ENCODE measurements at regions of chr6 and their contacts with region 1.

Region 1: DNA sequence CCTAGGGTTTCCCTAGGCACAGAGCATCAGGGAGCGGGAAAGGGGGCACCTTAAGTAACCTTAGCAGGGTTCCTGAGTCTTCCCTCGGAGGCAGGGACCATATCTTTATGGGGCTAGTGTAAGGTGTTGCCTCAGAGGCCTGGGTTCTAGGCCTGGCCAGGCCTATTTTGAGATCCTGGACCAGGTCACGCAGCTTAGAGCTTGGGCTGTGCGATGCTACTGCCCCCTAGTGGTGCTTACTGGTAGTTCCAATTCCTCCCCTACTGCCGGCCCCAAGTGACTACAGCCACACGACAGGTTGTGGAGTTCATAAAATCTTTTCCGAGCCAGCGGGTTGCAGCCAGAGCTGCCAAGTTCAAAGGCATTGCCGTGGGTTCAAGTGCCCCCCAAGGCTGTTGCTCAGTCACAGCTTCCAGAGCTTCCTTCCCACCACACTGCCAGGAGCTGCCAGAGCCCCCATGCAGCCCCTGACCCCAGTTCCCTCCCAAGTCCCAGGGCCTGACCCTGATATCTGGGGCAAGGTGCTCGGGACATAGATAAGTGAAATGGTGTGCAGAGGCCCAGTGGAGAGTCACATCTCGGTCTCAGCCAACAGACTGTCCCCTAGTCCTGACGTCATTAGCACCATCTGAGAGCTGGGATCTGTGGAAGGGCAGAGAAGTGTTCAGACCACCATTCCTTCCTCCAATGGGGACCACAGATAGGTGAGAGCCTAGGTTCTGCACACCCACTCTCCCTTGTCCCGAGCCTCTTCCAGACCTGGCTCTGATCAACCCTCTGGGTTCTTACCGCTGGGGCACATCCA is 3.3 kb downstream of the LRRC73 start:
- DNase-seq: peak; percentile 89
- H3K4me3 Mint-ChIP-seq: no peak overlapping the region
- H3K27ac Mint-ChIP-seq: no peak overlapping the region
- H3K4me1 Mint-ChIP-seq: peaks cover 5% of the 10 kb centered on the region
- H3K27me3 Mint-ChIP-seq: peaks cover 14% of the 10 kb centered on the region

Region 2: GRCh38 chr6:42901536-42901957 is 605.3 kb before region 1 on chr6:
- CTCF ChIA-PET with region 1: no interaction called
- intact Hi-C with region 1: loop called (anchors 5 kb)
- DNase-seq: peak; percentile 83
- H3K4me3 Mint-ChIP-seq: no peak overlapping the region
- H3K27ac Mint-ChIP-seq: no peak overlapping the region
- H3K4me1 Mint-ChIP-seq: peaks cover 11% of the 10 kb centered on the region
- H3K27me3 Mint-ChIP-seq: no peaks in the 10 kb centered on the region

Region 3: DNA sequence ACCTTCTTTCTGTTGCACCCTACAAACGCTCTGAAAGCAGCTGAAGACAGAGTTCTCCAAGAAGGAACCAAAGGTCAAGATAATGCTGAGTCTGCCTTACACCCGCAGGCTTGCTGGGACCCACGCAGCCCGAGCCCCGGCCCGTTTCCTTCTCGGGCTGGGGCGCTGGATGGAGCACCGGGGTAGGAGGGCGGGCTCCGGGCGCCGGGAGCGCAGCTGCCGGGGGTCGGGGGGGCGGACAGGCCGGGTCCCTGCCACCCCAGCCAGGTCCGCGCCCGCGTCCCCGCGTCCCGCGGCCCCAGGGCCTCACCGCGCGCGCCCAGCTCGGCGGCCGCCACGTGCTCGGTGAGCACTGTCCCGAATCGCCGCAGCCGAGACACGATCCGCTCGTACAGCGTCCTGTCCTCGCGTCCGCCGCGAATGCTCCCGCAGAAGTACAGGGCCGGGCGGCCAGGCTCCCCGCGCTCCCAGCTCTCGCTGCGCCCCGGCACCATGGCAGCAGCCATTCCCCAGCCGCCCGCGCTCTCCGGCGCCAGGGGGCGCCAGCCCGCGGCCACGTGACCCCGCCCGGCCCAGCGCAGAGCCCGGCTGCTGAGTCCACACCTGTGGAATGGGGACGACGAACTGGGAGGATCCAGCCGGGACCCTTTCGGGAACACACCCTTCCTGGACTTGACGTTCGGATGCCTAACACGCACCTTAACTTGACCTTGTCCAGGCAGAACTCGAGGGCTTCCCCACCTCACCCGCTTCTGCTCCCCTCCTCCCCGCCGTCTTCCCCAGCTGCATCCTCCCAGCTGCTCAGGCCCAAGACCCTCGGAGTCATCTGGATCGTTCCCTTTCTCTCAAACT is 277.7 kb before region 1 on chr6 and contains the start of gene DNPH1:
- CTCF ChIA-PET with region 1: interaction called, 10 read pairs
- intact Hi-C with region 1: no loop called
- DNase-seq: peak; percentile 79
- H3K4me3 Mint-ChIP-seq: peak within 1 kb of the TSS; percentile 90
- H3K27ac Mint-ChIP-seq: peak within 1 kb of the TSS; percentile 89
- H3K4me1 Mint-ChIP-seq: peaks cover 41% of the 10 kb centered on the region
- H3K27me3 Mint-ChIP-seq: no peaks in the 10 kb centered on the region
- total RNA-seq, gene DNPH1: 59.7 to 59.8 TPM

Region 4: GRCh38 chr6:43308101-43308989 is 198.5 kb before region 1 on chr6 and contains the start of gene CRIP3:
- CTCF ChIA-PET with region 1: interaction called, 17 read pairs
- intact Hi-C with region 1: no loop called
- DNase-seq: peak; percentile 67
- H3K4me3 Mint-ChIP-seq: peak within 1 kb of the TSS; percentile 82
- H3K27ac Mint-ChIP-seq: no peak within 1 kb of the TSS
- H3K4me1 Mint-ChIP-seq: peaks cover 6% of the 10 kb centered on the region
- H3K27me3 Mint-ChIP-seq: peaks cover 2% of the 10 kb centered on the region
- total RNA-seq, gene CRIP3: 2.9 to 3.1 TPM

Region 5: GRCh38 chr6:43386492-43386891 is 120.4 kb before region 1 on chr6:
- CTCF ChIA-PET with region 1: interaction called, 11 read pairs
- intact Hi-C with region 1: loop called (anchors 2 kb)
- DNase-seq: no peak
- H3K4me3 Mint-ChIP-seq: no peak overlapping the region
- H3K27ac Mint-ChIP-seq: no peak overlapping the region
- H3K4me1 Mint-ChIP-seq: peaks cover 50% of the 10 kb centered on the region
- H3K27me3 Mint-ChIP-seq: peaks cover 3% of the 10 kb centered on the region

Region 6: GRCh38 chr6:43454696-43455530 is 52.0 kb before region 1 on chr6:
- CTCF ChIA-PET with region 1: interaction called, 69 read pairs
- intact Hi-C with region 1: loop called (anchors 1 kb)
- DNase-seq: peak; percentile 27
- H3K4me3 Mint-ChIP-seq: peak overlapping the region; percentile 74
- H3K27ac Mint-ChIP-seq: no peak overlapping the region
- H3K4me1 Mint-ChIP-seq: peaks cover 8% of the 10 kb centered on the region
- H3K27me3 Mint-ChIP-seq: peaks cover 4% of the 10 kb centered on the region

Region 7: GRCh38 chr6:43516697-43517504 is 10.0 kb after region 1 on chr6 and contains the starts of genes POLR1C and YIPF3:
- CTCF ChIA-PET with region 1: interaction called, 24 read pairs
- intact Hi-C with region 1: no loop called
- DNase-seq: peak; percentile 99
- H3K4me3 Mint-ChIP-seq: no peak within 1 kb of the TSS
- H3K27ac Mint-ChIP-seq: no peak within 1 kb of the TSS
- H3K4me1 Mint-ChIP-seq: peaks cover 28% of the 10 kb centered on the region
- H3K27me3 Mint-ChIP-seq: no peaks in the 10 kb centered on the region
- total RNA-seq, gene POLR1C: 47.5 to 50.1 TPM
- total RNA-seq, gene YIPF3: 26.2 to 26.5 TPM